ENCODE measurements at regions of chr6 and their contacts with region 1.

Region 1: DNA sequence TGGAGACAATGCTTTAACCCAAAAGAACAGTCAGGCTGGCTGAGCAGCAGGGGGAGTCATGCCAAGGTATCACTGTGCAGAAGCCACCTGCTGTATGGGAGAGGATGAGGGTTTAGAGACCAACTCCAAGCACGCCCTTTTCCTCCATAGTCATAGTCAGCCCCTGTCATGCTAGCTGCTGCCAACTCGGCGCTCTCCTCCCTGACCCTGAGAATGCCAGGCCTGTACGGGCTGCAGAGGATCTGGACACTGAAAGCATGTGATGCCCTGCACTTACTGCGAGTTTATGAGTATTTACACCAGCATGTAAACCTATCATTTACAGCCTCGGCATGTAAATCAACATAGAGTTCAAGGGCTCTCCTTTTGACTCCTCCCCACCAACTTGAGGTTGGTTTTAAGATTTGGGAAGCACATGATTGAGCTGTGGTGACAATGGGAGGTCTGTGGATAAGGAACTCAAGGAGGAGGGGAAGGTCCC is 11.7 kb upstream of the SCUBE3 start:
- DNase-seq: no peak
- H3K4me3 ChIP-seq: no peak overlapping the region
- H3K27me3 ChIP-seq: no peaks in the 10 kb centered on the region
- CTCF ChIP-seq: no peak

Region 2: DNA sequence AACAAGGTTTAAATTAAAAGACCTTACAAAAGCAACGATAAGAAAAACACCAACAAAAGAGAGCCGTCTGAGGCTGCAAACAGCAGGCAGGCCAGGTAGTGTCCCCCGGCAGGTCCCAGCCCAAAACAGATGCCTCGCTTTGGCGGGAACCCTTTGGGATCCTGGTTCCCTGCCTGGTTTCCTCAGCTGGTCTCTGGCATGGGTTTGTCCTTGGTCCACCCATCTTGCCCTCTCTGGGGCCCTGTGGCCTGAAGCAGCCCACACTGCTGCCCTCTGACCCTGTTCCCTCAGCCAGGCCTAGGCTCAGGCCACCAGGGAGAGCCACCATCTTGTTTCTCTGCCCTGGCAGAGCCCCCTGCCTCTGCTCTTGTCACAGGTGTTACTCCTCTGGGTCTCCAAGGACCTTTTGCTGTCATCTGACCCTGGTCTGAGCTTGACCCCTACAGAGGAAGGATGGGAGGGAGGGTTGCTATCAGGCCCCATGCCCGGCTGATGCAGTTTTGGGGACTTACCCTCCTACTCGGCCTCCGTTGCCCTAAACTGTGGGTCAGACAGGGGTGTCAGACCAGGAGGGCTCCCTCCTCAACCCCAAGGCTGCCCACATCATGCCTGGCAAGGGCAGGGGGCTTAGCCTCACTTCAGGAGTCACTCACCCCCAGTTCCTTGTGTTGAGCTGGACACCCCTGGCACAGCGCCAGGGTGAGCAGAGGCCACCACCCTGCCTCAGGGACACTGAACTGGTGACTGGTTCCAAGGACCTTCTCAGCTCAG is 1025.7 kb before region 1 on chr6:
- CTCF ChIA-PET with region 1: no interaction called
- POLR2A ChIA-PET with region 1: no interaction called
- DNase-seq: no peak
- H3K4me3 ChIP-seq: no peak overlapping the region
- H3K27me3 ChIP-seq: peaks cover 5% of the 10 kb centered on the region
- CTCF ChIP-seq: no peak

Region 3: GRCh38 chr6:34986845-34987246 is 215.3 kb before region 1 on chr6:
- CTCF ChIA-PET with region 1: interaction called, 30 read pairs
- POLR2A ChIA-PET with region 1: no interaction called
- DNase-seq: no peak
- H3K4me3 ChIP-seq: no peak overlapping the region
- H3K27me3 ChIP-seq: no peaks in the 10 kb centered on the region
- CTCF ChIP-seq: peak; percentile 71

Region 4: DNA sequence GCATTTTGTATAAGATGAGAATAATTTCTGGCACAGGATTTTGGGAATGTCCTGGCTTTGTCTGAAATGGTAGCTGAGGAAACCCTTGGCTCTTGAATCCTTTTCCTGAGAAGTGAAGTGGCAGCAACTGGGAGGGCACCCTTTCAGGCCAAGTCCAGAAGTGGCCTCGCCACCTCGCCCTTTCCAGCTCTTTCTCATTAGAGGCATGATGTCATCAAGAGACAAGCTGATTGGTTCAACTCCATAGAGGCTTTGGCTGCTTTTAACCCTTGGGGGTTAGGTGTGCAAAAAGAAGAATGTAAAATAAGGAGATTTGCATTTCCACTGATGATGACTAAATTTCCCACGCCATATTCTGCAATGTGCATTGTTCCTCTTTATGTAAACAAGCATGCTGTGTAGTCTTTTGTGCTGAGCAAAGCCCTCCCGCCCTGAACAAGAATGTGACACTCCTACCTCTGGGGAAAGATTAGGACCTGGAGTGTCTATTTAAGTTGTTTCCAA is 177.5 kb before region 1 on chr6:
- CTCF ChIA-PET with region 1: no interaction called
- POLR2A ChIA-PET with region 1: no interaction called
- DNase-seq: no peak
- H3K4me3 ChIP-seq: no peak overlapping the region
- H3K27me3 ChIP-seq: no peaks in the 10 kb centered on the region
- CTCF ChIP-seq: no peak

Region 5: GRCh38 chr6:35146453-35146852 is 55.7 kb before region 1 on chr6:
- CTCF ChIA-PET with region 1: interaction called, 220 read pairs
- POLR2A ChIA-PET with region 1: no interaction called
- DNase-seq: no peak
- H3K4me3 ChIP-seq: no peak overlapping the region
- H3K27me3 ChIP-seq: no peaks in the 10 kb centered on the region
- CTCF ChIP-seq: peak; percentile 74

Region 6: DNA sequence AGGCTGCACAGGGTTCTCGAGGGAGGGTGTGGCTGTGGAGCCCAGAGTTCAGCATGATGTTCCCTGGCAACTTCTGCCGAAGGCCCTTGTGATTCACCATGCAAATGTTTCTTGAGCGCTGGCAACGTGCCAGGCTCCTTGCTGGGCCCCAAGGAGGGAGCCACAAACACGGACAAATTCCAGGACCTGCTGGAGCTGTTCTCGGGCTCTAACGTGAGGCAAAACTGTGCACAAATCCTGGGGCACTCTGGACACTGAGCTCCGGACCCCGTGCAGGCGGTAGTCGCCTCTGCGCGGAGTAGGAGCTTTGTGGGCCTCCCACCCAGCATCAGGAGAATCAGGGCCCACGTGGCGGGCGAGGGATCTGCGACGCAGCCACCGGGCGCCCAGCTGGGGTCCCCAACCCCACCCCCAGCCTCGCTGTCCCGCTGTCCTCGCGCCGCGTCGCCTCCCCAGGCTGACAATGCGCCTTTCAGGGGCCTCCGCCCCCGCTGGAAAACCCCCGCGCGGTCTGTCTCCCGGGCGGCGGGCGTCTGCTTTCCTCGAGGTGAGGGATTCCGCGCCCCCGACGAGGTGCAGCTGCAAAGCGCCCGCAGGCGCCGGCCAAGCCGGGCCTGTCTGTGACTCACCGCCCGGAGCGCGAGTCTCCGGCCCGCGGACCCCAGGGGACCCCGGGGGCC is 20.0 kb before region 1 on chr6:
- CTCF ChIA-PET with region 1: interaction called, 12 read pairs
- POLR2A ChIA-PET with region 1: interaction called, 3 read pairs
- DNase-seq: peak; percentile 21
- H3K4me3 ChIP-seq: no peak overlapping the region
- H3K27me3 ChIP-seq: no peaks in the 10 kb centered on the region
- CTCF ChIP-seq: no peak

Region 7: DNA sequence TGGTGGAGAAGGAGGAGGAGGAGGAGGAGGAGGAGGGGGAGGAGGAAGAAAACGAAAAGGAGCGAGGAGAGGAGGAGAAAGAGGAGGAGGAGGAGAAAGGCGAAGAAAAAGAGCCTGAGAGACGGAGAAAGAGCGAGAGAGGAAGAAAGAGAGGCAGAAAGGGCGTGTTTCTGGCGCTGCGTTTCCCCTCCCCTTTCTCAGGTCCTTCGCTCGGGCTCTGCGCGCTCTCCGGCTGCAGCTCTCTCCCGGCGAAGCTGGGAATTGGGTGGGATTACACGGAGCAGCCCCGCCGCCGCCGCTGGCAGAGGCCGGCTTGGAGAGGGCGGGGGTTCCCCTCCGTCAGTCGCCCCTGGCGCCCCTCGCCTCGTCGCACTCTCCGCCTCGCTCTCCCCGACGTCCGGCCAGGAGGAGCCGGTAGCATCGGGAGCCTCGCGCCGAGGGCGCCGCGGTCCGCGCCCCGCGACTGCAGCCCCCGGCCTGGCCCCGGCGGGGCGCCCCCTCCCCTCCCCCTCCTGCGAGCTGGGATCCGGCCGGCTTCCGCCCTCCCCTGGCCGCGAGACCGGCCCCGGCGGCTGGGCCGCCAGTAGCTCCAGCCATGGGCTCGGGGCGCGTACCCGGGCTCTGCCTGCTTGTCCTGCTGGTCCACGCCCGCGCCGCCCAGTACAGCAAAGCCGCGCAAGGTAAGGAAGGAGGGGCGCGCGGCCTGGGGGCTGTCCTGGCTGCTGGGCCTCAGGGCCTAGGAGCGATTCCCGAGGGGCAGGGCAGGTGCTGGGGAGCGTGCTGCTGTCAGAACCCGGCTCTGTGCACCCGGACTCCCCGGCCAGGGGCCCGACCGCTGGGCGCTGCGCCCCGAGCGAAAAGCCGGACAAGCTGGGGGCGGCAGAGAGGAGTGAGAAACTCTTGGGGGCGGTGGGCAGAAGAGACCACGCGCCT is 12.0 kb after region 1 on chr6 and contains the start of gene SCUBE3:
- CTCF ChIA-PET with region 1: interaction called, 28 read pairs
- POLR2A ChIA-PET with region 1: no interaction called
- DNase-seq: no peak
- H3K4me3 ChIP-seq: peak within 1 kb of the TSS; percentile 50
- H3K27me3 ChIP-seq: peaks cover 6% of the 10 kb centered on the region
- CTCF ChIP-seq: no peak
- polyA plus RNA-seq, gene SCUBE3: 12.3 and 13.1 TPM in 2 replicates

Region 8: GRCh38 chr6:35318196-35319171 is 116.4 kb after region 1 on chr6:
- CTCF ChIA-PET with region 1: no interaction called
- POLR2A ChIA-PET with region 1: no interaction called
- DNase-seq: no peak
- H3K4me3 ChIP-seq: peak overlapping the region; percentile 61
- H3K27me3 ChIP-seq: no peaks in the 10 kb centered on the region
- CTCF ChIP-seq: no peak